Breast epithelium (tissue), 4 donors: ENCODE measurements at regions of chr10 and their contacts with region 1.

Region 1: GRCh38 chr10:89047397-89047796 is 56.8 kb downstream of the FAS start:
- DNase-seq: no peak
- H3K4me3 ChIP-seq: no peak overlapping the region
- H3K27ac ChIP-seq: no peak overlapping the region
- H3K4me1 ChIP-seq: no peaks in the 10 kb centered on the region
- H3K27me3 ChIP-seq: no peaks in the 10 kb centered on the region
- CTCF ChIP-seq: no peak
- POLR2A ChIP-seq: no peak

Region 2: DNA sequence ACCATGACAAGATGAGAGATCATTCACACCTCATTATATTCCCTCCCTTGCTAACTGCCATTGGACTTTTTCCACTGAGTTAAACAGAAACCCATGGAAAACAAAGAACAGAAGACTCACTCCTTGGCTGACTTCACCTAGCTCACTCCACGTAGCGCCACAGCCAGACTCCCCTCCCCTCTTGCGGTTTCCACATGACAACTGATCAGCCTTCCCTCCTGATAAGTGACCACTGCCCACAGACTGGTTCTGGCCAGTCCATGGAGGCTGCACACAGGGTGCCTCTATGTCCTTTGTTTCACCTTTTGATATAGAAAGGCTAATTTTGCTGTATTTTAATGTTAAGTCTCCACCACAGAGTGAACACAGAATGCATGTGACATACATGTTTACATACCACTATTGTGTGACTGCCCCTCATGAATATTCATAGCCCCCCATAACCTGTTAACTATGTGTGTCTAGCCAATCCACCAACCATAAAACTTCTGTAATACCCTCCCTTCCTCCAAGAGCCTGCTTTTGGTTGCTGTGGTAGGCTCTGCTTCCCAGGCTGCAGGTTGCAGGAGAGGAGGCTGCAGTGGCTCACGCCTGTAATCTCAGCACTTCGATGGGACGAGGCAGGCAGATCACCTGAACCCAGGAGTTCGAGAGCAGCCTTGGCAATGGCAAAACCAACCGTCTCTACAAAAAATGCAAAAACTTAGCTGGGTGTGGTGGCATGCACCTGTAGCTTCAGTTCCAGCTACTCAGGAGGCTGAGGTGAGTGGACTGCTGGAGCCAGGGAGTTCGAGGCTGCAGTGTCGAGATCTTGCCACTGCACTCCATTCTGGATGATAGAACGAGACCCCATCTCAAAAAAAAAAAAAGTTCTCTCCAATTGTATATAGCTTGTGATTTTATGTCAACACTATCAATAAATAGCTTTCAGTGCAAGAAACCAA is 357.0 kb after region 1 on chr10:
- intact Hi-C with region 1: loop called (anchors 5 kb)
- DNase-seq: no peak
- H3K4me3 ChIP-seq: no peak overlapping the region
- H3K27ac ChIP-seq: no peak overlapping the region
- H3K4me1 ChIP-seq: no peaks in the 10 kb centered on the region
- H3K27me3 ChIP-seq: no peaks in the 10 kb centered on the region
- CTCF ChIP-seq: no peak
- POLR2A ChIP-seq: no peak